Activated CD8-positive, alpha-beta T cell treated with anti-CD3 and anti-CD28 coated beads for 36 hours (primary cell): ENCODE measurements at regions of chr7 and their contacts with region 1.

Region 1: DNA sequence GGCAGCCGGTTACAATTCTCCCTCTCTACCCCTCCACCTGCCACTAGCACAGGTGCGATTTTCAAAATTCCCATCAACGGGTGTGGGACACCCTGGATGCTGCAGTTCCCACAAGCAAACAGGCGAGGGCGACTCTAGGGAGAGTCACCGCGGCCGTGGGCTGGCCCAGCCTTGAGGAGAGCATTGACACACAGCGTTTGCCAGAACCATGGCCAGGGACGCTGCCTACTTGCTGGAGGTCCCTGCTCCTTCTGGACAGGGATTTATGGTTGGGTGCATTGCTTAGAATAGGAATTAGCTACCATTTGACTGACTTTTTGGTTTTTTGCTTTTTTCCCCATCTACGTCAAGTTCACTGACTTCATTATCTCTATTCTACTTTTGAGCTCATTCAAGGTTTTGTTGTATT is 19.0 kb upstream of the CLDN4 start:
- DNase-seq: peak; percentile 69
- ATAC-seq: peak; percentile 95
- H3K4me3 Mint-ChIP-seq: no peak overlapping the region
- H3K27ac Mint-ChIP-seq: no peak overlapping the region
- H3K4me1 Mint-ChIP-seq: no peaks in the 10 kb centered on the region
- H3K27me3 Mint-ChIP-seq: peaks cover 6% of the 10 kb centered on the region
- CTCF ChIP-seq: peak; percentile 78

Region 2: GRCh38 chr7:73626814-73627213 is 184.9 kb before region 1 on chr7:
- CTCF ChIA-PET with region 1: no interaction called
- POLR2A ChIA-PET with region 1: no interaction called
- intact Hi-C with region 1: no loop called
- DNase-seq: no peak
- ATAC-seq: no peak
- H3K4me3 Mint-ChIP-seq: no peak overlapping the region
- H3K27ac Mint-ChIP-seq: no peak overlapping the region
- H3K4me1 Mint-ChIP-seq: peaks cover 7% of the 10 kb centered on the region
- H3K27me3 Mint-ChIP-seq: peaks cover 49% of the 10 kb centered on the region
- CTCF ChIP-seq: no peak

Region 3: GRCh38 chr7:73822319-73823076 is 10.7 kb after region 1 on chr7:
- CTCF ChIA-PET with region 1: interaction called, 11 read pairs
- POLR2A ChIA-PET with region 1: no interaction called
- intact Hi-C with region 1: no loop called
- DNase-seq: no peak
- ATAC-seq: no peak
- H3K4me3 Mint-ChIP-seq: no peak overlapping the region
- H3K27ac Mint-ChIP-seq: no peak overlapping the region
- H3K4me1 Mint-ChIP-seq: peaks cover 10% of the 10 kb centered on the region
- H3K27me3 Mint-ChIP-seq: peaks cover 11% of the 10 kb centered on the region
- CTCF ChIP-seq: no peak

Region 4: GRCh38 chr7:73851410-73852234 is 39.9 kb after region 1 on chr7:
- CTCF ChIA-PET with region 1: interaction called, 85 read pairs
- POLR2A ChIA-PET with region 1: no interaction called
- intact Hi-C with region 1: loop called (anchors 2 kb)
- DNase-seq: peak; percentile 62
- ATAC-seq: peak; percentile 93
- H3K4me3 Mint-ChIP-seq: no peak overlapping the region
- H3K27ac Mint-ChIP-seq: peak overlapping the region; percentile 25
- H3K4me1 Mint-ChIP-seq: peaks cover 23% of the 10 kb centered on the region
- H3K27me3 Mint-ChIP-seq: peaks cover 9% of the 10 kb centered on the region
- CTCF ChIP-seq: no peak